ENCODE measurements at regions of chr9 and their contacts with region 1.

Region 1: GRCh38 chr9:131125128-131126058 is at the start of gene NUP214:
- DNase-seq: peak; percentile 100
- ATAC-seq: peak; percentile 100
- total RNA-seq, gene NUP214: 20.8 TPM

Region 2: GRCh38 chr9:130805510-130806326 is 319.7 kb before region 1 on chr9:
- intact Hi-C with region 1: no loop called
- DNase-seq: no peak
- ATAC-seq: no peak

Region 3: GRCh38 chr9:131056781-131057506 is 68.4 kb before region 1 on chr9:
- intact Hi-C with region 1: loop called (anchors 2 kb)
- DNase-seq: no peak
- ATAC-seq: peak; percentile 32

Region 4: DNA sequence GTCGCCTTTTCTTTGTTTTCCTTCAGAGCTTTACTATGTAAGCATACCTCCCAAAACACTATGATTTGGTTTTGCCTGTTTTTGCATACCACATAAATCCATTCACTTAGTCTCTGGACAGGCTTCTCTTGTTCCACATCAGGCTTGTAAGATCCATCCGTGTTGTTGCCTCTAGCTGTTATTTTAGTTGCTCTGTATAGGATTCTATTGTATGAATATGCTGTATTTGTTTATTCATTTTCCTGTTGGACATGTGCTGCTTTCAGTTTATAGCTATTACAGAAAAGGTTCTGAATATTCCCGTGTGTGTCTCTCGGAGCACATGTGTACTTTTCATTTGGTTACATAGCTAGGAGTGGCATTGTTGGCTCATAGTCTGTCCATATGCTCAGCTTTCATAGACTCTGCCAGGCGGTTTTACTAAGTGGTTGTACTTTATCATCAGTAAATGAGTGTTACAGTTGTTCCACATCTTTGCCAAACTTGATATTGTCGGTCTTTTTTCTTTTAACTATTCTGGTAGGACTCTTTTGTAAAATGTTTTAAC is 41.8 kb after region 1 on chr9:
- intact Hi-C with region 1: loop called (anchors 5 kb)
- DNase-seq: no peak
- ATAC-seq: no peak

Region 5: GRCh38 chr9:131407717-131408195 is 282.4 kb after region 1 on chr9:
- intact Hi-C with region 1: no loop called
- DNase-seq: no peak
- ATAC-seq: peak; percentile 57

Measured in Right ventricle myocardium inferior (tissue), 1 donor.